Heart left ventricle (tissue), 16 donors: ENCODE measurements at regions of chr4 and their contacts with region 1.

Region 1: GRCh38 chr4:154551872-154552686 is 1.9 kb upstream of the PLRG1 start:
- DNase-seq: peak; percentile 63 to 78 (median 69)
- ATAC-seq: peak; percentile 57 to 80 (median 74)
- H3K4me3 ChIP-seq: no peak overlapping the region
- H3K27ac ChIP-seq: peak overlapping the region in 1 of 12 donors; percentile 6
- H3K4me1 ChIP-seq: peaks cover 5 to 29% (median 15%) of the 10 kb centered on the region in 12 donors
- H3K27me3 ChIP-seq: no peaks in the 10 kb centered on the region
- CTCF ChIP-seq: peak; percentile 73 to 93 (median 83)
- POLR2A ChIP-seq: no peak

Region 2: DNA sequence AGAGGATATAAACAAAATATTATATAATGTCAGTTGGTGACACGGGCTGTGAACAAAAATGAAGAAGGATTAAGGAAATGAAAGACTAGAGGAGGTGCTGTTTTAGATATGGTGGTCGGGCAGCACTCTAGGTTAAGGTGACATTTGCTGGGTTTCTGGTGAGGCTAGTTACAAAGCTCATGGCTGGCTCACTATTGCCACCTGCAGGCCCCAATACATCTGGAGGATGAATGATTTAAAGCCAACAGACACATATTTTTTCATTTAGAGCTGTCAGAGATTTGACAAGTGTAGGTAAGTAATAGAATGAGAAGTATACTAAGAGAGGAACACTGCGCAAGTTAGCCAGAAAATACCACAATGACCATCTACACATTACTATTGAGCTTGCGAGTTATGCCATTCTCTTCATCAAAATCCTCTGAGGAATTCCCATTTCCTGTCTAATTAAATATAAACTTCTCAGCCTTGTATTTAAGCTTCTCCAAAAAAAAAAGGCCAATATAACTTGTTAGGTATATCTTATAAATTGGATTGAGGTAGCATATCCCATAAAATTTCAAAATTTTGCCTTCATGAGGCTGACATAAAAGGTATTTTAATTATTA is 66.7 kb after region 1 on chr4:
- intact Hi-C with region 1: loop called (anchors 1 to 5 kb)
- DNase-seq: peak in 1 of 5 donors; percentile 29
- ATAC-seq: no peak
- H3K4me3 ChIP-seq: no peak overlapping the region
- H3K27ac ChIP-seq: no peak overlapping the region
- H3K4me1 ChIP-seq: peaks cover 0 to 9% (median 0%) of the 10 kb centered on the region in 12 donors
- H3K27me3 ChIP-seq: no peaks in the 10 kb centered on the region
- CTCF ChIP-seq: peak; percentile 20 to 61 (median 45)
- POLR2A ChIP-seq: no peak

Region 3: GRCh38 chr4:154779362-154779947 is 227.4 kb after region 1 on chr4:
- intact Hi-C with region 1: loop called in 6 of 10 experiments (anchors 2 to 10 kb)
- DNase-seq: no peak
- ATAC-seq: no peak
- H3K4me3 ChIP-seq: no peak overlapping the region
- H3K27ac ChIP-seq: no peak overlapping the region
- H3K4me1 ChIP-seq: no peaks in the 10 kb centered on the region
- H3K27me3 ChIP-seq: peaks cover 0 to 30% (median 10%) of the 10 kb centered on the region in 9 donors
- CTCF ChIP-seq: peak in 10 of 12 donors; percentile 14 to 49 (median 30)
- POLR2A ChIP-seq: no peak

Region 4: DNA sequence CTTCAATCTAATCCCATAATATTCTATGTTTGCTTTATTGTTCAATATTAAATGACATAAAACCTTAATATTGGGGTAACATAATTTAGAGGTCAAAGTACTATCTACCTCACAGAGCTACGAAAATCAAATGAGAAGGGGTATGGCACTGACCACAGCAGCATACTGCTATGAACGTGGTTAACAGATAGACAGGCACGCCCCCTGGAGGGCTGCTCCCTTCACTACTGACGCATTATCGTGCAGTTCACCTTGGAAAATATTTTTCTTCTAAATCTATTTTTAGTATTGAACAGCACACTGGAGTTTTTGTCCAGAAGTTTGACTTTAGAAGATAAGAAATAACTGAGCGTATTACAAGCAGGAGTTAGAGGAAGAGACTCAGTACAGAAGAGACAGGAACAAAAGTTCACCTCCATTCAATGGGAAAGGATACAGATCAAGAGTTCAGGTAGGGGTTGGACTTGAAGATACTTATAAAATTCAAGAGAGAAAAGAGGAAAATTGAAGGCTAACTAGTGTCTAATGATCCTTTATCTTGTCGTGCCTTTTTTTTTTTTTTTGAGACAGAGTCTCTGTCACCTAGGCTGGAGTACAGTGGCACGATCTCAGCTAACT is 802.0 kb after region 1 on chr4:
- intact Hi-C with region 1: loop called in 1 of 10 experiments (anchors 5 kb)
- DNase-seq: peak; percentile 43 to 73 (median 52)
- ATAC-seq: peak; percentile 76 to 92 (median 81)
- H3K4me3 ChIP-seq: no peak overlapping the region
- H3K27ac ChIP-seq: no peak overlapping the region
- H3K4me1 ChIP-seq: peaks cover 0 to 5% (median 0%) of the 10 kb centered on the region in 12 donors
- H3K27me3 ChIP-seq: no peaks in the 10 kb centered on the region
- CTCF ChIP-seq: peak; percentile 47 to 79 (median 66)
- POLR2A ChIP-seq: no peak

Region 5: DNA sequence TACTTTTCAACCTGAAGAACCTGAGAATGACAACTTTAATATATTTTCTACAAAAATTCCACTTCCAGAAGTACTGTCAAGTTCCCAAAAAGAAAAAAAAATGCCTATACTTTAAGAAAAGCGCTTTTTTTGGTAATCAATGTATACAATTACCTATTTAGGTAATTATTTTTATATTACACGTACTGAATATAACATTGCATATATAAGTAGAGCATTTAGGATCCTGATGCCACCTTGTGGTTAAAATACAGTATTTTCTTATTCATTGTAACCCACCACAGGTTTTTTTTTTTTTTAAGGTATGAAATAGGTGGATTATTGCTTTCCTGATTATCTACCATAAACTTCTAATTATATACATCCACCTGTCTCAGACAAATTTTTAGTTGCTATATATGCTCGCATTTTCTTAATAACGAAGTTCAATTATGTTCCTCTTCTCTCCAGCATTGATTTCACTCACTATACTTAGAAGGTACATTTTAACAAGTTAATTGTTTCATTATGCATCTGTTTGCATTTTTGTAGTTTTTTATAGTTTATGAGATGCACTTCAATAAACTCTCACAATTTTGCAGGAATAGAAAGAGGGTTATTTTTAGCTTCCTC is 819.5 kb after region 1 on chr4:
- intact Hi-C with region 1: loop called in 7 of 10 experiments (anchors 5 to 10 kb)
- DNase-seq: no peak
- ATAC-seq: no peak
- H3K4me3 ChIP-seq: no peak overlapping the region
- H3K27ac ChIP-seq: no peak overlapping the region
- H3K4me1 ChIP-seq: peaks cover 0 to 12% (median 7%) of the 10 kb centered on the region in 12 donors
- H3K27me3 ChIP-seq: peaks cover 0 to 18% (median 0%) of the 10 kb centered on the region in 9 donors
- CTCF ChIP-seq: peak; percentile 31 to 57 (median 38)
- POLR2A ChIP-seq: no peak

Region 6: GRCh38 chr4:155376387-155377268 is 824.5 kb after region 1 on chr4 and contains the start of gene MAP9:
- intact Hi-C with region 1: loop called in 5 of 10 experiments (anchors 5 to 10 kb)
- DNase-seq: peak; percentile 92 to 94 (median 92)
- ATAC-seq: peak; percentile 97 to 99 (median 99)
- H3K4me3 ChIP-seq: peak within 1 kb of the TSS; percentile 45 to 84 (median 70)
- H3K27ac ChIP-seq: peak within 1 kb of the TSS in 4 of 12 donors; percentile 21 to 56 (median 38)
- H3K4me1 ChIP-seq: peaks cover 0 to 12% (median 7%) of the 10 kb centered on the region in 12 donors
- H3K27me3 ChIP-seq: peaks cover 0 to 21% (median 0%) of the 10 kb centered on the region in 9 donors
- CTCF ChIP-seq: no peak
- POLR2A ChIP-seq: no peak
- total RNA-seq, gene MAP9: 3.9 to 12.0 (median 9.0) TPM